ENCODE measurements at regions of chr5 and their contacts with region 1.

Region 1: GRCh38 chr5:1641560-1642166 is 117.9 kb upstream of the LPCAT1 start:
- DNase-seq: peak; percentile 87
- ATAC-seq: peak; percentile 66

Region 2: GRCh38 chr5:1167728-1168709 is 473.6 kb before region 1 on chr5:
- intact Hi-C with region 1: loop called (anchors 2 kb)
- DNase-seq: peak; percentile 85
- ATAC-seq: peak; percentile 81

Region 3: DNA sequence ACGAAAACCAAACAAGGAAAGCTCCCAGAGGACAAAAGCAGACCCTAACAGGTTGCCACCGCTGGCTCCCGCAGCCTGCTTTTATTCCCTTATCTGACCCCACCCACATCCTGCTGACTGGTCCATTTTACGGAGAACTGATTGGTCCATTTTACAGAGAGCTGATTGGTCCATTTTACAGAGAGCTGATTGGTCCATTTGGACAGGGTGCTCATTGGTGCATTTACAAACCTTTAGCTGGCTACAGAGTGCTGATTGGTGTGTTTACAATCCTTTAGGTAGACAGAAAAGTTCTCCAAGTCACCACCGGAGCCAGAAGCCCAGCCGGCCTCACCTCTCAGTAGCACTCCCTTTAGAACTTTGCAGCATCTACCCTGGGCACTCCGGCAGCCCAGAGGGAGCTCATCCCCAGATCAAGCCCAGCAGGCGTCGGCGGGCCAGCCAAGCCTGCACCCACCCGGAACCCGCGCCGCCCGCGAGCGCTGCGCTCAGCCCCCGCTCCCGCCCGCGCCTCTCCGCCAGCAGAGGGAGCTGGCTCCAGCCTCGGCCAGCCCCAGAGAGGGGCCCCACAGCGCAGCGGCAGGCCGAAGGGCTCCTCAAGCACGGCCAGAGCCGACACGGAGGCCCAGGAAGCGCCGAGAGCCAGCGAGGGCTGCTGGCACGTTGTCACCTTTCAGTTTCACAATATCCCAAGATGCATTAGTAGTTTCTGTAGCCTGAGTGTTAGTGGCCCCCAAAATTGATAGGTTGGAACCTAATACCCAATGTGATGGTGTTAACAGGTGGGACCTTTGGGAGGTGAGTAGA is 261.4 kb before region 1 on chr5:
- intact Hi-C with region 1: loop called (anchors 2 kb)
- DNase-seq: no peak
- ATAC-seq: peak; percentile 71

Region 4: DNA sequence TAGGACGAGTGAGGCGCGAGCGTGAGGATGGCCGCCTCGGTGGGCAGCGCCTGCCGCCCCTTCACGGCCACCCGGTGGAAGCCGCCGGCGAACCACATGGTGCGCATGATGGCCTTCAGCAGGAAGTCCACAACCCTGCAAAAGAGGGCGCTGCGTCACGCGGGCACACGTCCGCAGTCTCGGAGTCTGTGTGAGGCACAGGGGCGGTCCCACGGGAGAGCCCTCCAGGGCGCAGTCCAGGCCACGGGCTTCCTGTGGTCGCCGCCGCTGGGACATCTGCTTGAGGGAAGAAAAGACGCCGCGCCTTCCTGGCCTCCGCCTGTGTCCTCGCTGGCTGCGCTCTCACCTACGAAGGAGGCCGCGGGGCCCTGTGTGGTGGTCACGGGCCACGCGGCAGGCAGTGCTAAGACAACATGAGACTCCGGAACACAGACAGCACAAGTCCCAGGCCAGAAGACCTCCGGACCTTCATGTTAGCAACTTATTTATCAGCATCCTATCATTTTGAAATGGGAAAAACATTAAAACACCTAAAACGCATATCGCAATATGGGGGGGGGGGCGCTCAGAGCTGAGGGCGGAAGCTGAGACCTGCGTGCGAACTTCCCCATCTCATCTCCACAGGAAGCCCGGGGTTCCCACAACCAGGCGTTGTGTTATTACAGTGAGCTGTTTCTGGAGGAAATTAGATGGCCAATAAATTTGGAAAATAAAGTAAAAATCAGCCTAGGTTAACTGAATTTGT is 146.7 kb before region 1 on chr5:
- intact Hi-C with region 1: loop called (anchors 10 kb)
- DNase-seq: peak; percentile 86
- ATAC-seq: no peak